Calu3 (cell line): ENCODE measurements at regions of chr2 and their contacts with region 1.

Region 1: DNA sequence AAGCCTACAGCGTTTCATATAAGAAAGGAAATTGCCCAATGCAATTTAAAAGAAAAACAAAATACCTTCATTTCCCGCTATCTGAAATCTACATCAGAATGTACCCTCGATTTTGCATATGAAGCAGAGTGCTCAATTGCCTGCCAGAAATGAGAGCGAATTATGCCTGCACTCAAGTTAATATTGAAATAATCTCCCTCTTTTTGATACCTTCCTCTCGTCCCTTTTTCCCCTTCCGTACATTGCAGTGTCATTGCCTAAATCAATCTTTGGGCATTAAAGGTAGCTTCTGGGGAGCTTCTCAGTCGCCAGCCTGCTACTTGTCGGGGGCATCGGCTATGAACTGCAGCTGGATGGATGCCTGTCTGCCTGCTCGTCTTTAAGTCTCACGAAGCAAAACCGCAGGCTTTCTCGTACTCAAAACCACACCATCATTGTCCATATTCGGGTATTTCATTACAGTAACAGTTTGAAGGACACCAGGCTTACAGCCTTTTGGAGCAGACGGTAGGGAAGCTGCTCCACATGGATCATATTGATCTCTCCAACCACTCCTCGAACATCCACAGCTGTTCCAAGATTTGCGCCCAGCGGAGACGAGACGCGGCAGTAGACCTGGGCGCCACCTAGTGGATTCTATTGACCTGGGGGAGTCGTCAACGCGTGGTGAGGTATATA is 64.0 kb upstream of the HNRNPA3 start:
- DNase-seq: peak; percentile 89
- H3K4me3 Mint-ChIP-seq: peak overlapping the region; percentile 67
- H3K27ac Mint-ChIP-seq: peak overlapping the region; percentile 4
- H3K4me1 Mint-ChIP-seq: peaks cover 10% of the 10 kb centered on the region
- H3K27me3 Mint-ChIP-seq: peaks cover 9% of the 10 kb centered on the region
- CTCF ChIP-seq: peak; percentile 83

Region 2: GRCh38 chr2:176814306-176815052 is 334.1 kb before region 1 on chr2:
- CTCF ChIA-PET with region 1: interaction called, 4 read pairs
- intact Hi-C with region 1: loop called (anchors 1 kb)
- DNase-seq: no peak
- H3K4me3 Mint-ChIP-seq: no peak overlapping the region
- H3K27ac Mint-ChIP-seq: no peak overlapping the region
- H3K4me1 Mint-ChIP-seq: no peaks in the 10 kb centered on the region
- H3K27me3 Mint-ChIP-seq: no peaks in the 10 kb centered on the region
- CTCF ChIP-seq: peak; percentile 39

Region 3: DNA sequence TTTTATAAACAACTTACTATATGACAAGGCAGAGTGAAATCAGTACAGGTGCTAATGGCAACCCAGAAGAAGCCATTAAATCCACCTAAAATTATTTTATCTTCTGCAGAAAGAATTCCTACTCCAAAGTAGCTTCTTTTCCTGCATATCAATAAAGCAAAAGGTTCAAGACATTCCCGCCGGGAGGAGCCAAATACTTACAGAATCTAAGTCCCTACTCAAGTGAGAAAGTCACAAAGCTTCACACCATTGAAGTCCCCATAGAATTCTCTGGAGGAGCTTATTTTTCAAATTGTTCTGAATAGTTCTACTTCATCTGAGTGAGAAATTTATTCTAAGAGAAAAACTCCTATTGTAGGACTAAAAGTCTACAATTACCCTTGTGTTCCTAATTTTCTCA is 169.7 kb before region 1 on chr2:
- CTCF ChIA-PET with region 1: interaction called, 9 read pairs
- intact Hi-C with region 1: loop called (anchors 2 kb)
- DNase-seq: no peak
- H3K4me3 Mint-ChIP-seq: no peak overlapping the region
- H3K27ac Mint-ChIP-seq: no peak overlapping the region
- H3K4me1 Mint-ChIP-seq: no peaks in the 10 kb centered on the region
- H3K27me3 Mint-ChIP-seq: peaks cover 35% of the 10 kb centered on the region
- CTCF ChIP-seq: no peak

Region 4: DNA sequence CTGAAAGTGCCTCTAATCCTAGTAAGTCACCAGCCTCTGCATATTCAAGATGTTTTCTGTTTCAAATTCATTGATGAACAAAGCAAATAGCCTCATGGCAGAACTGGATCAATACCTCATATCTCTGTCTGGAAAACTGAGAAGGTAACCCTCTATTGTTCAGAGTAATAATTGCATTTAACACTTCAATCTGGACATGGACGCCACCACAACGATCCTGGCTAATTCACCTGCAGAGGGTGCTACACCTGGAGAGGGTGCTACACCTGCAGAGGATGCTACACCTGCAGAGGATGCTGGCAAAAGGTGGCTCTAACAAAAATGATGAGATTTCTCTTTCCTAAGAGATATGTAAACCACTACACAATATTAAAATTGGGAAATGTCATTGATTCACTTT is 119.1 kb before region 1 on chr2:
- CTCF ChIA-PET with region 1: interaction called, 3 read pairs
- intact Hi-C with region 1: loop called (anchors 5 kb)
- DNase-seq: peak; percentile 52
- H3K4me3 Mint-ChIP-seq: no peak overlapping the region
- H3K27ac Mint-ChIP-seq: no peak overlapping the region
- H3K4me1 Mint-ChIP-seq: no peaks in the 10 kb centered on the region
- H3K27me3 Mint-ChIP-seq: peaks cover 75% of the 10 kb centered on the region
- CTCF ChIP-seq: peak; percentile 43

Region 5: GRCh38 chr2:177325270-177325929 is 176.8 kb after region 1 on chr2:
- CTCF ChIA-PET with region 1: interaction called, 13 read pairs
- intact Hi-C with region 1: no loop called
- DNase-seq: peak; percentile 20
- H3K4me3 Mint-ChIP-seq: no peak overlapping the region
- H3K27ac Mint-ChIP-seq: no peak overlapping the region
- H3K4me1 Mint-ChIP-seq: peaks cover 16% of the 10 kb centered on the region
- H3K27me3 Mint-ChIP-seq: no peaks in the 10 kb centered on the region
- CTCF ChIP-seq: no peak